ENCODE measurements at regions of chr12 and their contacts with region 1.

Region 1: GRCh38 chr12:112992541-112993398 is 14.5 kb downstream of the OAS2 start:
- DNase-seq: peak; percentile 14 to 63 (median 21)
- H3K4me3 ChIP-seq: no peak overlapping the region
- H3K4me3 Mint-ChIP-seq: no peak overlapping the region
- H3K27ac ChIP-seq: no peak overlapping the region
- H3K27ac Mint-ChIP-seq: peak overlapping the region in 6 of 8 donors; percentile 43 to 87 (median 50)
- H3K4me1 ChIP-seq: peaks cover 5% of the 10 kb centered on the region
- H3K4me1 Mint-ChIP-seq: peaks cover 15 to 22% (median 20%) of the 10 kb centered on the region in 3 donors
- H3K27me3 ChIP-seq: no peaks in the 10 kb centered on the region
- H3K27me3 Mint-ChIP-seq: no peaks in the 10 kb centered on the region

Region 2: DNA sequence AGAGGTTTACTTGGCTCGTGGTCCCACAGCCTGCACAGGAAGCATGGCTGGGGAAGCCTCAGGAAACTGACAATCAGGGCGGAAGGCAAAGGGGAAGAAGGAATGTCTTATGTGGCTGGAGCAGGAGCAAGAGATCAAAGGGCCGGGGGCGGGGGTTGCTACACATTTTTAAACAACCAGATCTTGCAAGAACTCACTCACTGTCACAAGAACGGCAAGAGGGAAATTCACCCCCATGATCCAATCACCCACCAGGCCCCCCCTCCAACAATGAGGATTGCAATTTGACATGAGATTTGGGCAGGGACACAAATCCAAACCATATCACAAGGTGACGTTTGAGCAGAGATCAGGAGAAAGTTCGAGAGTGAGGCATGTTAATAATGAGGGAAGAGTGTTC is 364.9 kb before region 1 on chr12:
- CTCF ChIA-PET with region 1: no interaction called
- POLR2A ChIA-PET with region 1: no interaction called
- DNase-seq: no peak
- H3K4me3 ChIP-seq: no peak overlapping the region
- H3K4me3 Mint-ChIP-seq: no peak overlapping the region
- H3K27ac ChIP-seq: no peak overlapping the region
- H3K27ac Mint-ChIP-seq: no peak overlapping the region
- H3K4me1 ChIP-seq: no peaks in the 10 kb centered on the region
- H3K4me1 Mint-ChIP-seq: peaks cover 4 to 8% (median 5%) of the 10 kb centered on the region in 3 donors
- H3K27me3 ChIP-seq: no peaks in the 10 kb centered on the region
- H3K27me3 Mint-ChIP-seq: peaks cover 10% of the 10 kb centered on the region in 2 donors

Region 3: GRCh38 chr12:112900299-112901145 is 92.2 kb before region 1 on chr12:
- CTCF ChIA-PET with region 1: interaction called, 19 read pairs
- POLR2A ChIA-PET with region 1: no interaction called
- DNase-seq: peak in 4 of 5 donors; percentile 16 to 57 (median 25)
- H3K4me3 ChIP-seq: no peak overlapping the region
- H3K4me3 Mint-ChIP-seq: peak overlapping the region in 2 of 7 donors; percentile 35 to 42
- H3K27ac ChIP-seq: no peak overlapping the region
- H3K27ac Mint-ChIP-seq: peak overlapping the region in 4 of 8 donors; percentile 11 to 60 (median 24)
- H3K4me1 ChIP-seq: peaks cover 9% of the 10 kb centered on the region
- H3K4me1 Mint-ChIP-seq: peaks cover 15 to 30% (median 24%) of the 10 kb centered on the region in 3 donors
- H3K27me3 ChIP-seq: no peaks in the 10 kb centered on the region
- H3K27me3 Mint-ChIP-seq: peaks cover 10 to 27% of the 10 kb centered on the region in 2 donors

Region 4: DNA sequence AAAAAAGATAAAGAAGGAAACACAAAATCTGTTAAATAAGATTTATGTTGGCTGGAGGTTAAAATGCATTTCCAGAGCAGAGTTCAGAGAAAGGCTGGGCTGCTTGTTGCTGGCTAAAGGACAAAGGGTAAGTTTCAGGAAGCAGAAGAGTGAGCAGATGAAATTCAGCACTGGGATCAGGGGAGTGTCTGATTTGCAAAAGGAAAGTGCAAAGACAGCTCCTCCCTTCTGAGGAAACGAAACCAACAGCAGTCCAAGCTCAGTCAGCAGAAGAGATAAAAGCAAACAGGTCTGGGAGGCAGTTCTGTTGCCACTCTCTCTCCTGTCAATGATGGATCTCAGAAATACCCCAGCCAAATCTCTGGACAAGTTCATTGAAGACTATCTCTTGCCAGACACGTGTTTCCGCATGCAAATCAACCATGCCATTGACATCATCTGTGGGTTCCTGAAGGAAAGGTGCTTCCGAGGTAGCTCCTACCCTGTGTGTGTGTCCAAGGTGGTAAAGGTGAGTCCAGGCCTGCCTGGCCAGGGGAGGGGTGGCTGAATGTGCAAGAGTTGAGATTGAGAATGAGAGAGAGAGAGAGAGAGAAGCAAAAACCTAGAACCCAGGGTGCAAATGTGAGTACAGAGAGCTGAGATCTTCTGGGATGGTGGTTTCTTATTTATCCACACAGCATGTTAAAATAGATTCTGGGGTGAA is 85.9 kb before region 1 on chr12 and contains the start of gene OAS1:
- CTCF ChIA-PET with region 1: interaction called, 19 read pairs
- POLR2A ChIA-PET with region 1: no interaction called
- DNase-seq: peak in 2 of 5 donors; percentile 26 to 30
- H3K4me3 ChIP-seq: peak within 1 kb of the TSS; percentile 91
- H3K4me3 Mint-ChIP-seq: peak within 1 kb of the TSS; percentile 93 to 98 (median 95)
- H3K27ac ChIP-seq: peak within 1 kb of the TSS; percentile 57
- H3K27ac Mint-ChIP-seq: peak within 1 kb of the TSS; percentile 68 to 99 (median 94)
- H3K4me1 ChIP-seq: peaks cover 60% of the 10 kb centered on the region
- H3K4me1 Mint-ChIP-seq: peaks cover 60 to 86% (median 67%) of the 10 kb centered on the region in 3 donors
- H3K27me3 ChIP-seq: no peaks in the 10 kb centered on the region
- H3K27me3 Mint-ChIP-seq: no peaks in the 10 kb centered on the region
- total RNA-seq, gene OAS1: 4.5 to 5.5 TPM

Region 5: GRCh38 chr12:112978163-112979040 is 14.4 kb before region 1 on chr12 and contains the start of gene OAS2:
- CTCF ChIA-PET with region 1: interaction called, 37 read pairs
- POLR2A ChIA-PET with region 1: interaction called, 9 read pairs
- DNase-seq: peak; percentile 59 to 89 (median 82)
- H3K4me3 ChIP-seq: peak within 1 kb of the TSS; percentile 99
- H3K4me3 Mint-ChIP-seq: peak within 1 kb of the TSS; percentile 99 to 100 (median 100)
- H3K27ac ChIP-seq: peak within 1 kb of the TSS; percentile 84
- H3K27ac Mint-ChIP-seq: peak within 1 kb of the TSS; percentile 96 to 99 (median 98)
- H3K4me1 ChIP-seq: peaks cover 36% of the 10 kb centered on the region
- H3K4me1 Mint-ChIP-seq: peaks cover 44 to 64% (median 52%) of the 10 kb centered on the region in 3 donors
- H3K27me3 ChIP-seq: no peaks in the 10 kb centered on the region
- H3K27me3 Mint-ChIP-seq: no peaks in the 10 kb centered on the region
- total RNA-seq, gene OAS2: 40.1 to 46.6 TPM

Region 6: DNA sequence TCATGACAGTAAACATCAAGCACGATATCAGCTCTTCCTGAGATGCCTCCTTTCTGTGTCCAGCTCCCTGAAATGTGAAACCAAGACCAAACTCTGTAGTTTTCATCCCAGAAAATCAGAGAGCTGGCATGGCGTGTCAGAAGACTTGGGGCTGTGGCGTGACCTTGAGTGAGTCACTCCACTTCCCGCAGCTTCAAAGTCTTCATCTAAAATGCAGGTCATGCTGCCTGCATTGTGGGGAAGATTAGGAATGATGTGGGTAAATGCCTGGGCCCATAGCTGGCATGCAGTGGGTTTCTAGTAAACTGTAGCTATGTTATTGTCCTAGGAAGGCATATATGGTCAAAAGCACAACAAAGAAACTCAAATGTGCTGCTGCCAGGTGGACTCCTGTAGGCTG is 14.4 kb after region 1 on chr12:
- CTCF ChIA-PET with region 1: interaction called, 14 read pairs
- POLR2A ChIA-PET with region 1: no interaction called
- DNase-seq: no peak
- H3K4me3 ChIP-seq: no peak overlapping the region
- H3K4me3 Mint-ChIP-seq: no peak overlapping the region
- H3K27ac ChIP-seq: no peak overlapping the region
- H3K27ac Mint-ChIP-seq: peak overlapping the region in 2 of 8 donors; percentile 17 to 54
- H3K4me1 ChIP-seq: no peaks in the 10 kb centered on the region
- H3K4me1 Mint-ChIP-seq: no peaks in the 10 kb centered on the region
- H3K27me3 ChIP-seq: no peaks in the 10 kb centered on the region
- H3K27me3 Mint-ChIP-seq: no peaks in the 10 kb centered on the region

Region 7: DNA sequence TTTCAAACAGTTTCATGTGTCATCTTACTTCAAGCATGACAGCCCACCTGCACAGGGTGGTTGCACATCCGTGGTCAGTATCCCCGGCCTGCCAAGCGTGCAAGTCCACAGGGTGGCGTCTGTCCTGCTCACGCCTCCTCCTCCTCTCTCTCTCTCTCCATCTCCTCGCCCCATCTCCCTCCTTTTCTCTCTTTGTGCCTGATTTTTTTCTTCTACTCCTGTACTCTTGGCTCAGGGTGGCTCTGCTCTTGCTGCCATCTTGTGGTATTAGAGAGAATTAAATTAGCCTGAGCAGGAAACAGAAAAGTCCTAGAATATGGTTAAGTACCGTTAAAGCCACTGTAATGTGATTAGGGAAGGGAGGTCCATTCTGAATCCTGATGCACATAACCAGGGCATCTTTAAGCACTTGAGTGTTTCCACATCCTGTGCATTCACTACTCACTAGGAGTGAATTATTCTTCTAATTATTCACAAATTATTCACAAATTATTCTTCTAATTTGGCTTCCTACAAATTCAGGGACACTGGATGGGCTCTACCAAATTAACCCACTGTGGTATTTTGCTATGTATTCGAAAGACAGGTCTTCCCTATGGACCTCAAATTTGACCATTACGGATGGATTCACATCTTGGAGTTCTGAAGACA is 38.2 kb after region 1 on chr12:
- CTCF ChIA-PET with region 1: interaction called, 10 read pairs
- POLR2A ChIA-PET with region 1: no interaction called
- DNase-seq: peak in 1 of 5 donors; percentile 16
- H3K4me3 ChIP-seq: no peak overlapping the region
- H3K4me3 Mint-ChIP-seq: no peak overlapping the region
- H3K27ac ChIP-seq: no peak overlapping the region
- H3K27ac Mint-ChIP-seq: no peak overlapping the region
- H3K4me1 ChIP-seq: no peaks in the 10 kb centered on the region
- H3K4me1 Mint-ChIP-seq: peaks cover 0 to 5% (median 3%) of the 10 kb centered on the region in 3 donors
- H3K27me3 ChIP-seq: no peaks in the 10 kb centered on the region
- H3K27me3 Mint-ChIP-seq: peaks cover 5 to 6% of the 10 kb centered on the region in 2 donors

Region 8: GRCh38 chr12:113152835-113153814 is 160.4 kb after region 1 on chr12:
- CTCF ChIA-PET with region 1: interaction called, 10 read pairs
- POLR2A ChIA-PET with region 1: no interaction called
- DNase-seq: peak; percentile 34 to 77 (median 60)
- H3K4me3 ChIP-seq: peak overlapping the region; percentile 56
- H3K4me3 Mint-ChIP-seq: peak overlapping the region; percentile 76 to 89 (median 80)
- H3K27ac ChIP-seq: no peak overlapping the region
- H3K27ac Mint-ChIP-seq: peak overlapping the region in 2 of 8 donors; percentile 1 to 72
- H3K4me1 ChIP-seq: peaks cover 22% of the 10 kb centered on the region
- H3K4me1 Mint-ChIP-seq: peaks cover 16 to 34% (median 26%) of the 10 kb centered on the region in 3 donors
- H3K27me3 ChIP-seq: peaks cover 5% of the 10 kb centered on the region
- H3K27me3 Mint-ChIP-seq: peaks cover 15 to 19% of the 10 kb centered on the region in 2 donors